ENCODE measurements at regions of chr13 and their contacts with region 1.

Region 1: DNA sequence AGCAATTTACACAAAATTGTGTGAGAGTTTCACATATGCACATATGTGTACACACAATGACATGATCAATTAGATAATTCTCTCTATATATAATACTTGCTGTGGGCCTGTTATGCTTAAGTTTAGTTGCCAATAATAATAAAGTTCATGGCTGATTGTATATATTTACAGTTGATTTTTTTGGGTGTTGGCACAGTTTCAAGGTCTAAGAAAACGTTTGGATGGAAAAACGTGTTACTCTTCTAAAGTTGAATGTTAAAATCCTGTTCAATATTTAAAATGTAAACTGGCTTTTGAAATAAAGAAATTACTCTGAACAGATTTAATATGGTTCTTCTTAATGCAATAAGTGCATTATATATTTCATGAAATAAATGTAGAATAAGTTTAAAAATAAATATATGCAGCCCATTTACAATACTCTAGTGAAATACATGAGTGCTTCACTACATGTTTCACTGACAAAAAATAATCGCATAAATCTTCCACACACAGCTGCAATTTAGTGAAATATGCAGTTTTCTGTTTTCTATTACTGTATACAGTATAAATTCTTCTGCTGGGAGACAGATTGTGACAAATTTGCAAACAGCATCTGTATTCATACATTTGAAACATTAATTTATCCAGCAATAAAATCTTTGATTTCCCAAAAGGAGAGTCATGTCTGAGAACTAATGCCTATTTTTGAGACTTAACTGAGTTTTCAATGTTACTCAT is 586.9 kb upstream of the KLHL1 start:
- H3K4me3 Mint-ChIP-seq: no peak overlapping the region
- H3K27ac Mint-ChIP-seq: no peak overlapping the region
- H3K4me1 Mint-ChIP-seq: no peaks in the 10 kb centered on the region
- H3K27me3 Mint-ChIP-seq: no peaks in the 10 kb centered on the region

Region 2: DNA sequence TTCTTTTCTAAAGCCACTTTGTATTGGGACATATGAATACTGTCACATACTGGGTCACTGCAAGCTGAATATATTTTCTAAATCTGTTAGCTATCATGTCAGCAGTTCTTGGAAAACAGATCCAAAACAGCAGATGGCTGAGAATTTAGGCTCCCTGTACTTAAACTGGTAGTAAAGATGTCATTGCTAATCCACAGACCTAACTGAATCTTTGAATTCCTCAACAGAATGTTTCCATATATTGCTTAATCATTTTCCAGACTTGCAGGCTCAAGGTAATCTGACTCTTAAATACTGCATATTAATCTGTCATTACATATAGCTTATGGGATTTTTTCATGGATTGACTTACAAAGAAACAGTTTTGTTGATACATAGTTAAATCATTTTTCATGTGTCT is 52.1 kb after region 1 on chr13:
- intact Hi-C with region 1: loop called (anchors 2 kb)
- H3K4me3 Mint-ChIP-seq: no peak overlapping the region
- H3K27ac Mint-ChIP-seq: no peak overlapping the region
- H3K4me1 Mint-ChIP-seq: no peaks in the 10 kb centered on the region
- H3K27me3 Mint-ChIP-seq: no peaks in the 10 kb centered on the region